ENCODE measurements at regions of chr12 and their contacts with region 1.

Region 1: GRCh38 chr12:69894800-69895383 is 69.9 kb downstream of the MYRFL start:
- DNase-seq: no peak
- H3K4me3 ChIP-seq: no peak overlapping the region
- CTCF ChIP-seq: no peak

Region 2: DNA sequence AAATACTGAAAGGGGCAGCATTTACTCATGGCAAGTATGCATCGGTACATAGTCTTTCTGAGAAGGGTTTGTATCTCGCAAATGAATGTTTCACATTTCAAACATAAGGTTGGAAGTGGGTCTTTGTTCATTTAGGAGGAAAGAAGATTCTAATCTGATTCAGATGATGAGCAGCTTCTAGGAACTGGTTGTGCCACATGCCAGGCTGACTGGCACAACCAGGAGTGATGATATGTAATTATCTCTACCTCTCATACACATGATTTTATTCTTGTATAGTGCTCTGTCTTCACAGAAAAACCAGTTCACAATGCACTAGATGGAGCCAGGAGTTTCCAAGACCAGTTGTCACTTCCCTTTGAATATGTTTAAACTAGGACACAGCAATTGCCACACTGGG is 182.1 kb before region 1 on chr12:
- CTCF ChIA-PET with region 1: no interaction called
- POLR2A ChIA-PET with region 1: no interaction called
- DNase-seq: no peak
- H3K4me3 ChIP-seq: no peak overlapping the region
- CTCF ChIP-seq: no peak

Region 3: GRCh38 chr12:69779928-69780327 is 115.0 kb before region 1 on chr12:
- CTCF ChIA-PET with region 1: no interaction called
- POLR2A ChIA-PET with region 1: no interaction called
- DNase-seq: no peak
- H3K4me3 ChIP-seq: no peak overlapping the region
- CTCF ChIP-seq: peak; percentile 33

Region 4: GRCh38 chr12:69879041-69879960 is 15.6 kb before region 1 on chr12:
- CTCF ChIA-PET with region 1: interaction called, 42 read pairs
- POLR2A ChIA-PET with region 1: no interaction called
- DNase-seq: no peak
- H3K4me3 ChIP-seq: peak overlapping the region; percentile 42
- CTCF ChIP-seq: peak; percentile 80

Region 5: DNA sequence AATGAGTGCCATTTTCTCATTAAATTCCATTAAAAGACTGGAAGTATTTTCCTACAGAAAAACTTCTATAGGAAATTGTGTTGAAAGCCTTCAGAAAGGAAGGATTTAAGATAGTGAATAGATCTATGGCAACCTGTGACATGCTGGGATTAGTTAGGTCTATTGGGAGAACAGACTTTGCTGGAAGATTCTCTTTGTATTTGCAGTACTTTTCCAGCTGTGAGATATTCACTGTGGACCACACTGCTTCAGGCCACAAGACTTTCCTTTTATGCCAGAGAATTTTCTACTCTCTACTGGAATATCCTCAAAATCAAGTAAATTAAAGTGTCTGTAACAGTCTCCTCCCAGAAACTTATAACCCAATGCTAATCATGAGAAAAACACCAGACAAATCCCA is 66.4 kb after region 1 on chr12:
- CTCF ChIA-PET with region 1: no interaction called
- POLR2A ChIA-PET with region 1: no interaction called
- DNase-seq: no peak
- H3K4me3 ChIP-seq: no peak overlapping the region
- CTCF ChIP-seq: no peak